Heart left ventricle (tissue), 16 donors: ENCODE measurements at regions of chr17 and their contacts with region 1.

Region 1: DNA sequence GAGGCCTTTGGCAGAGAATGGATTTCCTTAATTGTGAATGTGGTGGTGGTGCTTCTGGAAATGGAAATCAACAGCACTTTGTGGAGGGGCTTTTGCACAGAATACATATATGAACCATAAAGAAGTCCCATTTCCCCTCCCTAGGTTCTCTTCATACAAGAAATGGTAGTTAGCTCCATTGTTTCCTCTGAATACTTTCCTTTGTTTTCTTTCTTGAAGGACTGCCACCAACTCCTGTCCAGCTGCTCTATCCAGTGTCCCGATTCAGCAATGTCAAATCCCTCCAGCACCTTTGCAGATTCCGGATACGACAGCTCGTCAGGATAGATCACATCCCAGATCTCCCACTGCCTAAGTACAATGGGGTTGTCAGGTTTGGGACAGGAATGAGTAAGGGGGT is 33.2 kb upstream of the ARHGAP23 start:
- DNase-seq: no peak
- ATAC-seq: no peak
- H3K4me3 ChIP-seq: no peak overlapping the region
- H3K27ac ChIP-seq: no peak overlapping the region
- H3K4me1 ChIP-seq: peaks cover 0 to 10% (median 0%) of the 10 kb centered on the region in 12 donors
- H3K27me3 ChIP-seq: no peaks in the 10 kb centered on the region
- CTCF ChIP-seq: no peak
- POLR2A ChIP-seq: no peak

Region 2: GRCh38 chr17:38326996-38327792 is 67.9 kb before region 1 on chr17:
- intact Hi-C with region 1: no loop called
- DNase-seq: peak in 4 of 5 donors; percentile 21 to 62 (median 41)
- ATAC-seq: peak in 3 of 4 donors; percentile 28 to 67 (median 66)
- H3K4me3 ChIP-seq: no peak overlapping the region
- H3K27ac ChIP-seq: peak overlapping the region in 2 of 12 donors; percentile 12 to 73
- H3K4me1 ChIP-seq: peaks cover 0 to 15% (median 0%) of the 10 kb centered on the region in 12 donors
- H3K27me3 ChIP-seq: peaks cover 0 to 14% (median 0%) of the 10 kb centered on the region in 9 donors
- CTCF ChIP-seq: no peak
- POLR2A ChIP-seq: no peak

Region 3: GRCh38 chr17:38358586-38359513 is 36.2 kb before region 1 on chr17:
- intact Hi-C with region 1: loop called in 1 of 10 experiments (anchors 5 kb)
- DNase-seq: no peak
- ATAC-seq: no peak
- H3K4me3 ChIP-seq: no peak overlapping the region
- H3K27ac ChIP-seq: peak overlapping the region in 6 of 12 donors; percentile 13 to 51 (median 32)
- H3K4me1 ChIP-seq: peaks cover 4 to 74% (median 45%) of the 10 kb centered on the region in 12 donors
- H3K27me3 ChIP-seq: no peaks in the 10 kb centered on the region
- CTCF ChIP-seq: no peak
- POLR2A ChIP-seq: no peak